ENCODE measurements at regions of chr7 and their contacts with region 1.

Region 1: DNA sequence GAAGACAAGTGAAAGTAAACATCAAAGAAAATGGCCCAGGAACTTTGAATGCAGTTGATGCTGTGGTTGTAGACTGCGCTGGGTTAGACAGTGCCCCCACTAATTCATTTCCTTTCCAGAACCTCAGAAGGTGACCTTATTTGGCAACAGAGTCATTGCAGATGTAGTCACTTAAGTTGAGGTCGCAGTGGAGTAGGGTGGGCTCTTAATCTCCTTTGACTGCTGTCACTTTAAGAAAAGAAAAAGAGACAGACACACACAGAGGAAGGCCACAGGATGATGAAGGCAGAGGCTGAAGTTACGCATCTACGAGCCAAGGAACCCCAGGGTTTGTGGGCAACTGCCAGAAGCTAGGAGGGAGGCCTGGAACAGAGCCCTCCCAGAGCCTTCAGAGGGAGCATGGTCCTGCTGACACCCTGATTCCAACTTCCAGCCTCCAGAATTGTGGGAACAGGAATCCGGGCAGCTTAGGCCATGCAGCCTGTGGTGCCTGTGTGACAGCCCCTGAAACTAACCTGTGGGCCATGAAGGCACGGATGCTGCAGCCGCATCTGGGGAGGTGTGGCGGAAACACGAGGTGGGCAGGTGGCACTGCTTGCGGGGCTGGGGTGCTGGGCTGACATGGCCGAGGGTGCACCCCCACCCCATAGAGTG is 107.6 kb downstream of the PRKAG2 start:
- DNase-seq: peak; percentile 49
- ATAC-seq: peak; percentile 85
- H3K4me3 Mint-ChIP-seq: peak overlapping the region; percentile 40
- H3K27ac Mint-ChIP-seq: peak overlapping the region; percentile 93
- H3K4me1 Mint-ChIP-seq: peaks cover 51% of the 10 kb centered on the region
- H3K27me3 Mint-ChIP-seq: no peaks in the 10 kb centered on the region

Region 2: GRCh38 chr7:151795168-151795811 is 26.0 kb after region 1 on chr7:
- CTCF ChIA-PET with region 1: interaction called, 4 read pairs
- POLR2A ChIA-PET with region 1: no interaction called
- intact Hi-C with region 1: loop called in 1 of 2 experiments (anchors 1 kb)
- DNase-seq: peak; percentile 94
- ATAC-seq: peak; percentile 93
- H3K4me3 Mint-ChIP-seq: no peak overlapping the region
- H3K27ac Mint-ChIP-seq: peak overlapping the region; percentile 67
- H3K4me1 Mint-ChIP-seq: peaks cover 33% of the 10 kb centered on the region
- H3K27me3 Mint-ChIP-seq: no peaks in the 10 kb centered on the region

Measured in activated CD4-positive, alpha-beta T cell treated with anti-CD3 and anti-CD28 coated beads for 36 hours (primary cell).